Endothelial cell of umbilical vein (primary cell): ENCODE measurements at regions of chr2 and their contacts with region 1.

Region 1: GRCh38 chr2:192162392-192163042 is 32.2 kb downstream of the TMEFF2 start:
- DNase-seq: peak; percentile 87
- H3K4me3 ChIP-seq: no peak overlapping the region
- H3K27ac ChIP-seq: peak overlapping the region; percentile 16
- H3K4me1 ChIP-seq: peaks cover 12% of the 10 kb centered on the region
- H3K27me3 ChIP-seq: no peaks in the 10 kb centered on the region
- CTCF ChIP-seq: peak; percentile 68 to 73
- POLR2A ChIP-seq: no peak

Region 2: GRCh38 chr2:191555092-191555742 is 607.3 kb before region 1 on chr2:
- CTCF ChIA-PET with region 1: interaction called, 28 read pairs
- POLR2A ChIA-PET with region 1: no interaction called
- dilution Hi-C with region 1: no loop called
- intact Hi-C with region 1: loop called (anchors 1 kb)
- DNase-seq: peak; percentile 80
- H3K4me3 ChIP-seq: no peak overlapping the region
- H3K27ac ChIP-seq: no peak overlapping the region
- H3K4me1 ChIP-seq: peaks cover 8% of the 10 kb centered on the region
- H3K27me3 ChIP-seq: peaks cover 3 to 7% of the 10 kb centered on the region in 2 experiments
- CTCF ChIP-seq: peak; percentile 65 to 69
- POLR2A ChIP-seq: no peak

Region 3: GRCh38 chr2:191824398-191824797 is 338.1 kb before region 1 on chr2:
- CTCF ChIA-PET with region 1: interaction called, 532 read pairs
- POLR2A ChIA-PET with region 1: no interaction called
- dilution Hi-C with region 1: no loop called
- intact Hi-C with region 1: no loop called
- DNase-seq: no peak
- H3K4me3 ChIP-seq: no peak overlapping the region
- H3K27ac ChIP-seq: no peak overlapping the region
- H3K4me1 ChIP-seq: no peaks in the 10 kb centered on the region
- H3K27me3 ChIP-seq: no peaks in the 10 kb centered on the region
- CTCF ChIP-seq: no peak
- POLR2A ChIP-seq: no peak

Region 4: GRCh38 chr2:191869178-191869577 is 293.3 kb before region 1 on chr2:
- CTCF ChIA-PET with region 1: interaction called, 219 read pairs
- POLR2A ChIA-PET with region 1: interaction called, 4 read pairs
- dilution Hi-C with region 1: no loop called
- intact Hi-C with region 1: loop called (anchors 1 kb)
- DNase-seq: peak; percentile 65
- H3K4me3 ChIP-seq: no peak overlapping the region
- H3K27ac ChIP-seq: no peak overlapping the region
- H3K4me1 ChIP-seq: peaks cover 39% of the 10 kb centered on the region
- H3K27me3 ChIP-seq: no peaks in the 10 kb centered on the region
- CTCF ChIP-seq: peak; percentile 25 to 37
- POLR2A ChIP-seq: no peak

Region 5: GRCh38 chr2:191927319-191927867 is 235.1 kb before region 1 on chr2:
- CTCF ChIA-PET with region 1: interaction called, 36 read pairs
- POLR2A ChIA-PET with region 1: no interaction called
- dilution Hi-C with region 1: no loop called
- intact Hi-C with region 1: loop called (anchors 1 kb)
- DNase-seq: peak; percentile 99
- H3K4me3 ChIP-seq: peak overlapping the region in 1 of 3 experiments; percentile 5
- H3K27ac ChIP-seq: peak overlapping the region; percentile 84
- H3K4me1 ChIP-seq: peaks cover 48% of the 10 kb centered on the region
- H3K27me3 ChIP-seq: no peaks in the 10 kb centered on the region
- CTCF ChIP-seq: no peak
- POLR2A ChIP-seq: peak; percentile 65

Region 6: DNA sequence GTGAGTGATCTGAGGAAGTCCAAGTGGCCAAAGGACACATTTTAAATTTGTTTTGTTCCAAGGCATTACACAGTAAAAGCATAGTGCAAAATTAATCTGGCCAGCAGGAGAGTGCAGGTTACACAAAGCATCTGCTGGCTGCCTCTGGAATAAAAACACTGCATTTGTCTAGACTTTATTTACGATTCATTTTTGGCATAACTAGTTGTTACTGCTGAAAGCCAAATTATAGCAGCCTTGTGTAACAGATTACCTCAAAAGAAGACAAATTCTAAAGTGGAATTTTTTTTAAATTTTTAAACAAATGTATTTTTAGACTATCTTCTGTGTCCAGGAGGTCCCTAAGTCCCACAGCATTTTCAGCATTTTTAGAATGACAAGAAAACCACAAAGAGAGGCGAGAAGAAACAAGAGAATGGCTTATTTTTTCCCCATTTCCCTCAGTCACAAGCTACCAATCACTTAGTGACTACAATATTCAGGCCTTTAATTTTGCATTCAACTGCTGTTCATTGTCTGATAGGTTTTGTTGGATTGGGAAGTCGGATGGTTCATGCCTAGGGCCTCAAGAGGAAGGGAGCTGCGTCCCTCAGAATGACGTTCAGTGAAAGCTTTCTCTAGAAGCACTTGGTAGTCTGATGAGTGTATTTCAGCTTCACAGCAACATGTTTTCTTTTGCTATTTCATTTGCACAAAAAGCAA is 13.7 kb before region 1 on chr2:
- CTCF ChIA-PET with region 1: interaction called, 14 read pairs
- POLR2A ChIA-PET with region 1: no interaction called
- dilution Hi-C with region 1: no loop called
- intact Hi-C with region 1: no loop called
- DNase-seq: peak; percentile 23
- H3K4me3 ChIP-seq: no peak overlapping the region
- H3K27ac ChIP-seq: no peak overlapping the region
- H3K4me1 ChIP-seq: peaks cover 6% of the 10 kb centered on the region
- H3K27me3 ChIP-seq: no peaks in the 10 kb centered on the region
- CTCF ChIP-seq: no peak
- POLR2A ChIP-seq: no peak